Activated T-helper 1 cell treated with anti-CD3 and anti-CD28 coated beads, Interleukin-12 subunit alpha, Interleukin-12 subunit beta, Interleukin-2, Interleukin-4 antibody, amounts not matched to agents 30 ng/mL and 10 ng/mL and 1 ng/mL, durations not matched to agents 14 hours and 24 hours and 36 hours (primary cell): ENCODE measurements at regions of chr1 and their contacts with region 1.

Region 1: GRCh38 chr1:212284744-212285684 is at the start of gene PPP2R5A:
- DNase-seq: peak; percentile 99
- H3K4me3 Mint-ChIP-seq: peak within 1 kb of the TSS; percentile 97
- H3K27ac Mint-ChIP-seq: peak within 1 kb of the TSS; percentile 99
- H3K4me1 Mint-ChIP-seq: peaks cover 50% of the 10 kb centered on the region
- H3K27me3 Mint-ChIP-seq: peaks cover 3% of the 10 kb centered on the region
- total RNA-seq, gene PPP2R5A: 46.4 and 53.7 TPM in 2 replicates

Region 2: GRCh38 chr1:211578640-211579433 is 706.2 kb before region 1 on chr1 and contains the start of gene SLC30A1:
- intact Hi-C with region 1: loop called (anchors 1 kb)
- DNase-seq: peak; percentile 99
- H3K4me3 Mint-ChIP-seq: peak within 1 kb of the TSS; percentile 94
- H3K27ac Mint-ChIP-seq: peak within 1 kb of the TSS; percentile 88
- H3K4me1 Mint-ChIP-seq: peaks cover 42% of the 10 kb centered on the region
- H3K27me3 Mint-ChIP-seq: peaks cover under 1% of the 10 kb centered on the region
- total RNA-seq, gene SLC30A1: 10.6 and 12.0 TPM in 2 replicates

Region 3: GRCh38 chr1:211939876-211940468 is 345.0 kb before region 1 on chr1:
- intact Hi-C with region 1: loop called (anchors 5 kb)
- DNase-seq: peak; percentile 33
- H3K4me3 Mint-ChIP-seq: no peak overlapping the region
- H3K27ac Mint-ChIP-seq: peak overlapping the region; percentile 2
- H3K4me1 Mint-ChIP-seq: peaks cover 47% of the 10 kb centered on the region
- H3K27me3 Mint-ChIP-seq: no peaks in the 10 kb centered on the region

Region 4: DNA sequence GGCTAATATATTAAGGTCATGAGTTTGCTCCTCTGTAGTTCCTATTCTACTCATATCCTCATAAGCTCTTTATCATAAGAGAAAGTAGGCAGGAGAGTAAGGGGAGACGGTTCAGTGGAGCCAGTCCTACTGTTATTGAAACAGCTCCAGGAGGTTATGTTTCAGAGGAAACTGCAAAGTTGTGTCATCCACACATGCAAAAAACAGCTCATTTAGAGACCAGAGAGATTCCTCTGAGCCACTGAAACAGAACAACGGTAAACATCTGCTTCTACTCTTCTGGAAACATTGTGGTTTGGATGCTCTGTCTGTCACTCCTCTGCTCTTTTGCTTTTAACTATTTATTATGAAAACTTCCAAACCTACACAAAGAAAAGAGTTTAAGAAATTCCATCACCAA is 66.1 kb before region 1 on chr1:
- intact Hi-C with region 1: loop called (anchors 1 kb)
- DNase-seq: peak; percentile 18
- H3K4me3 Mint-ChIP-seq: peak overlapping the region; percentile 35
- H3K27ac Mint-ChIP-seq: peak overlapping the region; percentile 81
- H3K4me1 Mint-ChIP-seq: peaks cover 31% of the 10 kb centered on the region
- H3K27me3 Mint-ChIP-seq: peaks cover 3% of the 10 kb centered on the region

Region 5: GRCh38 chr1:212302745-212303383 is 17.9 kb after region 1 on chr1:
- intact Hi-C with region 1: loop called (anchors 2 kb)
- DNase-seq: no peak
- H3K4me3 Mint-ChIP-seq: no peak overlapping the region
- H3K27ac Mint-ChIP-seq: peak overlapping the region; percentile 42
- H3K4me1 Mint-ChIP-seq: peaks cover 29% of the 10 kb centered on the region
- H3K27me3 Mint-ChIP-seq: no peaks in the 10 kb centered on the region

Region 6: DNA sequence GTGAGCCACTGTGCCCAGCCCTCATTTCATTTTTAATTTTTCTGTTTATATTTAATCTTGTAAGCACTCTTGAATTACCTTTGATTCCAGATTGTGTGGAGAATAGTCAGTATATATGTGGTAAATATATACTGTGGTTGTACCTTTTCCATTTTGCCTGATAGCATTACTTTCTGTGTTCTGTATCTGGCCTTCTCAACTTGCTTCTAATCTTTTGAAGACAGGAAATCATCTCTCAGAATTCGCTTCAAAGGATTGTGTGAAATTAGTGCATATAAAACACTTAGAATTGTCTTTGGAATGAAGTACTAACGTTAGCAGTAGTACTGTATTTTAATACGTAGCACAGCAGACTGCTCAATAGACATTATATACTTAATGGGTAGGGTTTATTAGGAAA is 38.1 kb after region 1 on chr1:
- intact Hi-C with region 1: no loop called
- DNase-seq: no peak
- H3K4me3 Mint-ChIP-seq: no peak overlapping the region
- H3K27ac Mint-ChIP-seq: no peak overlapping the region
- H3K4me1 Mint-ChIP-seq: peaks cover 6% of the 10 kb centered on the region
- H3K27me3 Mint-ChIP-seq: no peaks in the 10 kb centered on the region

Region 7: GRCh38 chr1:212432706-212433576 is 147.9 kb after region 1 on chr1 and contains the start of gene NENF:
- intact Hi-C with region 1: loop called (anchors 2 kb)
- DNase-seq: peak; percentile 74
- H3K4me3 Mint-ChIP-seq: peak within 1 kb of the TSS; percentile 77
- H3K27ac Mint-ChIP-seq: peak within 1 kb of the TSS; percentile 53
- H3K4me1 Mint-ChIP-seq: peaks cover 32% of the 10 kb centered on the region
- H3K27me3 Mint-ChIP-seq: peaks cover 6% of the 10 kb centered on the region
- total RNA-seq, gene NENF: 29.7 and 32.5 TPM in 2 replicates

Region 8: GRCh38 chr1:212465311-212465710 is 180.3 kb after region 1 on chr1:
- intact Hi-C with region 1: no loop called
- DNase-seq: no peak
- H3K4me3 Mint-ChIP-seq: no peak overlapping the region
- H3K27ac Mint-ChIP-seq: no peak overlapping the region
- H3K4me1 Mint-ChIP-seq: no peaks in the 10 kb centered on the region
- H3K27me3 Mint-ChIP-seq: peaks cover 6% of the 10 kb centered on the region